T-cell (primary cell): ENCODE measurements at regions of chr10 and their contacts with region 1.

Region 1: GRCh38 chr10:84352251-84352842 is 24.0 kb downstream of the CCSER2 start:
- DNase-seq: peak; percentile 34 to 83 (median 66)
- ATAC-seq: peak; percentile 84 to 92 (median 87)
- H3K4me3 ChIP-seq: no peak overlapping the region
- H3K4me3 Mint-ChIP-seq: no peak overlapping the region
- H3K27ac ChIP-seq: no peak overlapping the region
- H3K27ac Mint-ChIP-seq: no peak overlapping the region
- H3K4me1 ChIP-seq: peaks cover 11 to 31% of the 10 kb centered on the region in 2 experiments
- H3K4me1 Mint-ChIP-seq: peaks cover 71 to 82% (median 78%) of the 10 kb centered on the region in 3 donors
- H3K27me3 ChIP-seq: no peaks in the 10 kb centered on the region
- H3K27me3 Mint-ChIP-seq: no peaks in the 10 kb centered on the region

Region 2: GRCh38 chr10:84375011-84375410 is 22.7 kb after region 1 on chr10:
- CTCF ChIA-PET with region 1: interaction called, 5 to 11 read pairs
- POLR2A ChIA-PET with region 1: no interaction called
- DNase-seq: peak in 23 of 35 experiments; percentile 6 to 79 (median 31)
- ATAC-seq: peak in 3 of 4 experiments; percentile 52 to 67 (median 59)
- H3K4me3 ChIP-seq: no peak overlapping the region
- H3K4me3 Mint-ChIP-seq: no peak overlapping the region
- H3K27ac ChIP-seq: no peak overlapping the region
- H3K27ac Mint-ChIP-seq: peak overlapping the region; percentile 28 to 34
- H3K4me1 ChIP-seq: no peaks in the 10 kb centered on the region
- H3K4me1 Mint-ChIP-seq: peaks cover 34 to 60% (median 54%) of the 10 kb centered on the region in 3 donors
- H3K27me3 ChIP-seq: no peaks in the 10 kb centered on the region
- H3K27me3 Mint-ChIP-seq: no peaks in the 10 kb centered on the region

Region 3: DNA sequence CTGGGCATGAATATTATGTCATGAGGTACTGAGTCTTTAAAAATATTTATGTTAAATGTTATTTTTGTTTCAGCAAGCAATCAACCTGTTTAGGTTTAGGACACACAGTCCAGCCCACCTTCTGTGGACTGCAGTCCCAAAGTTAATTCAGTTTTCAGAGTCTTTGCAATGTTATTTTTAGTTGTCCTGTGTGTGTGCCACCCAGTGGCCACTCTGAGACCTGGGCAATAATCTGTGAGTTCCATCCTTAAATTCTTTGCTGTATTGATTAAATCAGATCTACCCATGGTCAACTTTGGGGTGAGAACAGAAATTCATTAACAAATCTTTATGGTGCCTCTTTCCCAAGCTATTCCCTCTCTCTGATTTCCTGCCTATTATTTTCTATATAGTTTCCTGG is 391.1 kb after region 1 on chr10:
- CTCF ChIA-PET with region 1: no interaction called
- POLR2A ChIA-PET with region 1: no interaction called
- DNase-seq: no peak
- ATAC-seq: no peak
- H3K4me3 ChIP-seq: no peak overlapping the region
- H3K4me3 Mint-ChIP-seq: no peak overlapping the region
- H3K27ac ChIP-seq: no peak overlapping the region
- H3K27ac Mint-ChIP-seq: no peak overlapping the region
- H3K4me1 ChIP-seq: no peaks in the 10 kb centered on the region
- H3K4me1 Mint-ChIP-seq: no peaks in the 10 kb centered on the region
- H3K27me3 ChIP-seq: no peaks in the 10 kb centered on the region
- H3K27me3 Mint-ChIP-seq: peaks cover 3 to 7% of the 10 kb centered on the region in 2 donors